Head of caudate nucleus (tissue), 42 donors: ENCODE measurements at regions of chr4 and their contacts with region 1.

Region 1: DNA sequence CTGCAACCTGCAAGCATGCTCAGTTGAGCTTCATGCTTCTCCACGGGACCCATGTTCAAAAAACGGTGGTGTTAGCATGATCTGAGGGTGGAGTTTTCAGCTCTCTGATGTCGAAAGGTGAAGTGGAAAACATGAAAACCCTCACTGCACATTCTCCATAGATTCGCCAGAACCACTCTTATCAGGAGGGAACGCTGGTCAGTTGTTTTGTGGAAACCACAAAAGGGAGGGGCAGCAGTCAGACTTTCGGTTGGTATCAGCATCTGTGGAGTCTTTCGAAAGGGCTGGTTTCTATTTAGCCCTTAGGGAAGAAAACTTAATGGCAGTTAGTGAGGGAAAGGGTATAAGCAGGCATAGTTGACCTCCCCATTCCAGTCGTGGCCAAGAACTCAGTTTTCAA is 12.6 kb downstream of the PPA2 start:
- DNase-seq: no peak

Region 2: DNA sequence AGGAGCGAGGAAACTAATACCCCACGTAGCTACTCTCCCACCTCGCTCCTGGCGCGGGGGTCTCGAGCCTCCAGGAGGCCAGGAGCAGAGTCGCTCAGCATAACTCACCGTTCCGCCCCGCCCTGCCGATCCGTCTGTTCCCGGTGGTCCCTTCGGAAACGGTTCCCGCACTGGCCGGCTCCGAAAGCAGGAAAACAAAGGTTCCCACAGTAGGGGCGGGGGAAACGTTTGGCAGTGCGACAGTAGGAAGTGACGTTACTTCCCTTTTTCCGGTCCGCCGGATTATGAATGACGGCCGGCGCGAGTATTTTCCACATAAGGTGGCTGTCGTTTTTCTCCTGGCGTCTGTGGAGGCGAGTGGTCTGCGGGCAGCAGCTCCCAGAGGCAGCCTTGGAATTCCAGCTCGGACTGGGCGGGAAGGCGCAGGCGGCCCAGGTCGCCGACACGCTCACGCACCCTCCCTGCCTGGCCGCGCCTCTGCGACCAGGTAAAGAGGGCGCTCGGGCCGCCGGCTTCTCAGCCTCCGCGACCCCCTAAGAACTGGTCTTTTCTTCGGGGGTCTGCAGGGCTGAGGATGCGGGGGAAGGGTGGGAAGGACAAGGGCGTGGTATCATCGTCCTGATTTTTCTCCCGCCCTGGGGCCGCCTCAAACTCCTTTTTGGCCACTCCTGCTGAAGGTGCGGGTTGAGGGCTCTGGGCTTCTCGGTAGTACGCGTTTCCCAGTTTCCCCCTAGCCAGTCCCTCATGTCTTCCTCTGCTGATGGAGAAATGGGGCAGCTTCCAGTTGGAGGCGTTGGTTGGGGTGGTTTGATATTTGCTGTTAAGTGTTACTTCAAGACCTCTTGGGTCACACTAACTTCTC is 247.5 kb after region 1 on chr4 and contains the starts of genes GSTCD and INTS12:
- intact Hi-C with region 1: loop called (anchors 10 kb)
- DNase-seq: peak; percentile 89 to 98 (median 94)

Region 3: GRCh38 chr4:105725623-105726022 is 264.4 kb after region 1 on chr4:
- intact Hi-C with region 1: no loop called
- DNase-seq: no peak